ENCODE measurements at regions of chr20 and their contacts with region 1.

Region 1: DNA sequence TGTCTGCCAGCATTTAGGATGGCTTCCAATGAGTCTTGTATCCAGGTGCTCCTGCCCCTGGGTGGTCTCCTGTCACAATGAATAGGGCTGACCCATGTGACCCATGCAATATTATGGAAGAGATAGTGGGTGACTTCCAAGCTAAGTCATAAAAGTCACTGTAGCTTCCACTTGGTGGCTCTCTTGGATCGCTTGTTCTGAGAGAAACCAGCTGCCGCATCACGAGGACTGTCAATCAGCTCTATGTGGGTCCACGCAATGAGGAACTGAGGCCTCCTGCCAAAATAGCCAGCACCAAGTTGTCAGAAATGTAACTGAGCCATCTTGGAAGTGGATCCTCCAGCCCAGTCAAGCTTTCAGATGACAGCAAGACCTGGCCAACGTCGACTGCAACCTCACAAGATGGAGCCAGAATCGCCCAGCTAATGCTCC is 14.9 kb upstream of the MATN4 start:
- DNase-seq: no peak
- ATAC-seq: peak; percentile 34
- H3K4me3 ChIP-seq: no peak overlapping the region
- H3K4me3 Mint-ChIP-seq: no peak overlapping the region
- H3K27ac ChIP-seq: no peak overlapping the region
- H3K27ac Mint-ChIP-seq: no peak overlapping the region
- H3K4me1 ChIP-seq: peaks cover 15 to 16% of the 10 kb centered on the region in 2 donors
- H3K4me1 Mint-ChIP-seq: peaks cover 10 to 42% (median 26%) of the 10 kb centered on the region in 7 donors
- H3K27me3 ChIP-seq: no peaks in the 10 kb centered on the region
- H3K27me3 Mint-ChIP-seq: no peaks in the 10 kb centered on the region

Region 2: DNA sequence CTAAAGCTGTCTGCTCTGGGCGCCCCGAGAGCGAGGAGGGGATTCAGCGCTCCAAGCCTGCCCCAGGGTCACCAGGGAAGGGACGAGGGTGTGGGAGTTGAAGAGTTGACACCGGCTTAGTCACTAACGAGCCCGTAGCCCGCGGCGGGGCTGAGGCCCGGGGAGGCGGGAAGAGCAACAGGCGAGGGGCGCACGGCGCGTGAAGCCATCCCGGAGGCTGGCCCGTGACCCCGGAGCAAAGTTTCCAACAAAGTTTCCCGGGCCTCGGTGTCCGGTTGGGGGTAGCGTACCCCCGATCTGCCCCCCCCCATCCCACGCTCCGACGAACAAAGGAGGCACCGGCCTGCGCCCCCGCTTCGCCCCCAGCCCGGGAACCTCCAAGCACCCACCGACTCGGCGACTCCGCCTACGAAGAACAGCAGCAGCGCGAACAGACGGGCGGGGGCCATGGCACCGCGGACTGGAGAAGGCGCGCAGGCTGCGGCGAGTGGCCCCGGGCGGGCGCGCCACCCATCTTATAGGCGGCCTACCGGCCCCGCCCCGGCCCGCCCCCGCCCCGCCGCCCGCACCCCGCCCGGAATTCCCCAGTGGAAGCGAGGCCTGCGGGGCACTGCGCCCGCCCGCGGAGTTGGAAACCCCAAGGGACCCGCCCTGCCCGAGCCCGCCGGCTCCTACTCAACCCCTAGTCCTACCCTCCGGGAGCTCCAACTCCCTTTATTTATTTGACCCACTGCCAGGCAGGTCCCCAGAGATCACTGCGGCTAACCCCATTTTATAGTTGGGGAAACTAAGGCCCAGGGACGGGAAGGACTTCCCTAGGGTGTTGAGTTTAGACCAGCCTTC is 25.2 kb after region 1 on chr20 and contains the start of gene SDC4:
- CTCF ChIA-PET with region 1: interaction called, 4 read pairs
- POLR2A ChIA-PET with region 1: no interaction called
- intact Hi-C with region 1: loop called in 1 of 2 experiments (anchors 2 kb)
- DNase-seq: peak in 3 of 9 donors; percentile 13 to 85 (median 42)
- ATAC-seq: peak; percentile 87
- H3K4me3 ChIP-seq: peak within 1 kb of the TSS; percentile 54
- H3K4me3 Mint-ChIP-seq: peak within 1 kb of the TSS; percentile 45 to 95 (median 74)
- H3K27ac ChIP-seq: no peak within 1 kb of the TSS
- H3K27ac Mint-ChIP-seq: peak within 1 kb of the TSS in 1 of 9 donors; percentile 83
- H3K4me1 ChIP-seq: peaks cover 4% of the 10 kb centered on the region in 2 donors
- H3K4me1 Mint-ChIP-seq: peaks cover 3 to 51% (median 7%) of the 10 kb centered on the region in 7 donors
- H3K27me3 ChIP-seq: no peaks in the 10 kb centered on the region
- H3K27me3 Mint-ChIP-seq: peaks cover 0 to 18% (median 7%) of the 10 kb centered on the region in 5 donors
- total RNA-seq, gene SDC4: 0.38 to 46.7 (median 0.56) TPM

Region 3: DNA sequence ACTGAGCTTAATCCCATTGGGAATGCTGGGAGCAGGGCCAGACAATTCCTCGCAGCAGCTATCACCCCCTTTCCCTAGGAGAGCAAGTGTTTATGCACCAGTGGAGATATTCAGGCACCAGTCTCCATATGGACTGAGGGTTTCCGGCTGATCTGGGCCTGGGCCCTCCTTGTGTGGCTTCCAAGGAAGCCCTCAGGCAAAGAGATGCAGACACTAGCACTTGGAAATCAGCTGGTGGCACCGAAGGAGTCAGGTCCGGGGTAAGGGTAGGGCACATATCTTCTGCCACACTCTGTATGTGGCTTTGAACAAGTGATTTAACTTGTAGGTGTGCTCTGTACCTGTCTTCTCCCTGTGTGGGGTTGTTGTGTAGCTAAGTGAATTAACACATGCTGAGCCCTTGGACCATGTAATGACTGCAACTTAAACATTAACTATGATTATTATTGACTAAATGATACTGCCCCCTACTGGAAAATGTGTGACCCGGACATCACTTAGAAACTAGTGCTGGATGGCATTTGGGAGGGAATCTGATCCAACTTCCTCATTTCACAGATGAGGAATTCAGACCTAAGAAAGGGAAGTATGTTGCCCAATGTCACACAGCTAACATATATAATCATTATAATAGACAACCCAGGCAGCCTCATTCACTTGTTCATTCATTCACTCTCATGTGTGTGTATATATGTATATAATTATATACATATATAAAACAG is 127.3 kb after region 1 on chr20:
- CTCF ChIA-PET with region 1: interaction called, 8 read pairs
- POLR2A ChIA-PET with region 1: no interaction called
- intact Hi-C with region 1: loop called (anchors 1 kb)
- DNase-seq: peak in 6 of 9 donors; percentile 19 to 51 (median 38)
- ATAC-seq: peak; percentile 76
- H3K4me3 ChIP-seq: no peak overlapping the region
- H3K4me3 Mint-ChIP-seq: no peak overlapping the region
- H3K27ac ChIP-seq: no peak overlapping the region
- H3K27ac Mint-ChIP-seq: no peak overlapping the region
- H3K4me1 ChIP-seq: no peaks in the 10 kb centered on the region
- H3K4me1 Mint-ChIP-seq: peaks cover 0 to 19% (median 8%) of the 10 kb centered on the region in 7 donors
- H3K27me3 ChIP-seq: peaks cover 0 to 6% of the 10 kb centered on the region in 2 donors
- H3K27me3 Mint-ChIP-seq: peaks cover 0 to 31% (median 3%) of the 10 kb centered on the region in 5 donors

Region 4: DNA sequence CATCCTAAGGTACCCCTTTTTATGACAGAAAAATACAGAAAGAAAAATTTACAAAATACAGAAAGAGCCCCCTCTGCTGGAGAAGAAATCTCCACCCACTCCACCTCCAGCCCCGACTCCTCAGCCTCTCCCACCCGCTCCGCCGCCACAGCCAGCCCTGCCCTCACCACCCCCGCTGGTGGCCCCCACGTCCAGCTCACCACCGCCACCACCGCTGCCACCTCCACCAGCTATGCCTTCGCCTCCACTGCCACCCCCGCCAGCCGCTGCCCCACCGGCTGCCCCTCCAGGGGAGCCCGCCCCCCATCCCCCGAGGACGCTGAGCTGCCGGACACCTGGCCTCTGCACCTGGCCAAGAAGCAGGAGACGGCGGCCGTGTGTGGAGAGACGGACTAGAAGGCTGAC is 164.3 kb after region 1 on chr20:
- CTCF ChIA-PET with region 1: no interaction called
- POLR2A ChIA-PET with region 1: no interaction called
- intact Hi-C with region 1: no loop called
- DNase-seq: no peak
- ATAC-seq: no peak
- H3K4me3 ChIP-seq: no peak overlapping the region
- H3K4me3 Mint-ChIP-seq: no peak overlapping the region
- H3K27ac ChIP-seq: no peak overlapping the region
- H3K27ac Mint-ChIP-seq: no peak overlapping the region
- H3K4me1 ChIP-seq: no peaks in the 10 kb centered on the region
- H3K4me1 Mint-ChIP-seq: peaks cover 0 to 3% (median 0%) of the 10 kb centered on the region in 7 donors
- H3K27me3 ChIP-seq: no peaks in the 10 kb centered on the region
- H3K27me3 Mint-ChIP-seq: peaks cover 26 to 40% (median 33%) of the 10 kb centered on the region in 5 donors